Activated CD4-positive, alpha-beta memory T cell treated with anti-CD3 and anti-CD28 coated beads for 36 hours (primary cell): ENCODE measurements at regions of chr3 and their contacts with region 1.

Region 1: DNA sequence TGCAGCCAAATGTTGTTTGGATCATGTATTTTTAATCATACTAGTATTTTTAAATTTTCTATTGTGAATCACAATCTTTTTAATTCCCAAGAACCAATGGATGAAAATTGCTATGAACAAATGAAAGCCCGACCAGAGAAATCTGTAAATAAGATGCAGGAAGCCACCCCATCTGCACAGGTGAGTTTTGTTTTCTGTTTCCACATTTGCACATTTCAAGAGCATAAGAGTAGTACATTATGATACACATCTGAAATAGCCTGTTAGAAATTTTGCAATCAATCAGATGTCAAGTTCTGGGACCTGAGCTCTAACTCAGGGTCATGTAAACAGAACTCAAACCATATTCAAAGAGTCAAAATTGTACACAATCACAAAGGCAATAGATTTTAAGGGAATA is 26.5 kb downstream of the TRAT1 start:
- DNase-seq: no peak
- H3K4me3 Mint-ChIP-seq: no peak overlapping the region
- H3K27ac Mint-ChIP-seq: peak overlapping the region; percentile 15
- H3K4me1 Mint-ChIP-seq: peaks cover 66% of the 10 kb centered on the region
- H3K27me3 Mint-ChIP-seq: no peaks in the 10 kb centered on the region

Region 2: DNA sequence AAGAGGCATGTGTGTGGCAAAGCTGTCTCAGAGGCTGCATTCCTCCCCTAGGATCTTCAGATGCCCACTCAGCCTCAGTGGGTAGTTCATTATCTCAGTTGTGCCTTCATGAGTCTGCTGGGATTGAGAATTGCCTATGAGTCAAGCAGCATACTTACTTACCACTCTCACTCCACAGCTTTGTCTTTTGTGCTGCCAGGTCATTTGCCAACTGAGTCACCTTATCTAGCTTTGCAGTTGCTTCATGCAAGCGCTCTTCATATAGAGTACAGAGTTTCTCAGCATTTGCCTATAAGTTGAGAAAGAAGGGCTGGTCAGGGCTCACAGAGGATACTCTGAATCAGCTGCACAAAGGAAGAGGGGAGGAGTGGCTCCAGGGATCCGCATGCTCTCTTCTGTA is 428.1 kb before region 1 on chr3:
- CTCF ChIA-PET with region 1: no interaction called
- POLR2A ChIA-PET with region 1: no interaction called
- intact Hi-C with region 1: no loop called
- DNase-seq: peak; percentile 27
- H3K4me3 Mint-ChIP-seq: no peak overlapping the region
- H3K27ac Mint-ChIP-seq: no peak overlapping the region
- H3K4me1 Mint-ChIP-seq: peaks cover 10% of the 10 kb centered on the region
- H3K27me3 Mint-ChIP-seq: no peaks in the 10 kb centered on the region

Region 3: GRCh38 chr3:108862865-108863798 is 14.1 kb after region 1 on chr3:
- CTCF ChIA-PET with region 1: no interaction called
- POLR2A ChIA-PET with region 1: interaction called, 7 read pairs
- intact Hi-C with region 1: loop called (anchors 2 kb)
- DNase-seq: peak; percentile 61
- H3K4me3 Mint-ChIP-seq: peak overlapping the region; percentile 48
- H3K27ac Mint-ChIP-seq: peak overlapping the region; percentile 99
- H3K4me1 Mint-ChIP-seq: peaks cover 46% of the 10 kb centered on the region
- H3K27me3 Mint-ChIP-seq: no peaks in the 10 kb centered on the region

Region 4: DNA sequence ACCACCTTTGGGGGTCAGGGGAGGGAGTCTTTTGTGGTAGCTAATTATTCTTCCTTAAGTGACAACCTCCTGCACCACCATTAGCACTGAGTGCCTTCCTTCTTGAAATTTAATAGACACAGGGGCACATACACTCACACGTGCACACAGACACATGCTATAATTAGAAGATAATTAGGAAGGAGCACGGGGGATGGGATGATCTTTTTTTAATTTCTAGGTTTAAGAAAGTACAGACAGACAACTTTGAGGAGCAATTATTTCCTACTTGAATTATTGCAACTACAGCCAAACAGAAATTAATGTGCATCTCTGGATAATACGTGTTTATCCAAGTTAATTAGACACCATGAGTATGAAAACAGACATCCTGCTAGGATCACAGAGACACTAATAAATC is 149.4 kb after region 1 on chr3:
- CTCF ChIA-PET with region 1: no interaction called
- POLR2A ChIA-PET with region 1: no interaction called
- intact Hi-C with region 1: no loop called
- DNase-seq: no peak
- H3K4me3 Mint-ChIP-seq: no peak overlapping the region
- H3K27ac Mint-ChIP-seq: no peak overlapping the region
- H3K4me1 Mint-ChIP-seq: no peaks in the 10 kb centered on the region
- H3K27me3 Mint-ChIP-seq: peaks cover 12% of the 10 kb centered on the region